ENCODE measurements at regions of chr5 and their contacts with region 1.

Region 1: GRCh38 chr5:132500931-132501630 is 10.5 kb upstream of the IRF1 start:
- DNase-seq: peak; percentile 85
- ATAC-seq: peak; percentile 34
- H3K4me3 Mint-ChIP-seq: no peak overlapping the region
- H3K27ac Mint-ChIP-seq: no peak overlapping the region
- H3K4me1 Mint-ChIP-seq: peaks cover 22% of the 10 kb centered on the region
- H3K27me3 Mint-ChIP-seq: no peaks in the 10 kb centered on the region

Region 2: GRCh38 chr5:132272311-132273210 is 228.5 kb before region 1 on chr5:
- CTCF ChIA-PET with region 1: interaction called, 4 read pairs
- POLR2A ChIA-PET with region 1: no interaction called
- intact Hi-C with region 1: loop called in 1 of 2 experiments (anchors 1 kb)
- DNase-seq: peak; percentile 85
- ATAC-seq: peak; percentile 42
- H3K4me3 Mint-ChIP-seq: no peak overlapping the region
- H3K27ac Mint-ChIP-seq: no peak overlapping the region
- H3K4me1 Mint-ChIP-seq: peaks cover 2% of the 10 kb centered on the region
- H3K27me3 Mint-ChIP-seq: peaks cover 18% of the 10 kb centered on the region

Region 3: GRCh38 chr5:132410451-132411381 is 90.4 kb before region 1 on chr5:
- CTCF ChIA-PET with region 1: interaction called, 21 read pairs
- POLR2A ChIA-PET with region 1: interaction called, 16 read pairs
- intact Hi-C with region 1: loop called in 1 of 2 experiments (anchors 1 kb)
- DNase-seq: peak; percentile 92
- ATAC-seq: peak; percentile 68
- H3K4me3 Mint-ChIP-seq: peak overlapping the region; percentile 83
- H3K27ac Mint-ChIP-seq: peak overlapping the region; percentile 98
- H3K4me1 Mint-ChIP-seq: peaks cover 71% of the 10 kb centered on the region
- H3K27me3 Mint-ChIP-seq: no peaks in the 10 kb centered on the region

Region 4: GRCh38 chr5:132437604-132438266 is 63.3 kb before region 1 on chr5:
- CTCF ChIA-PET with region 1: interaction called, 13 read pairs
- POLR2A ChIA-PET with region 1: no interaction called
- intact Hi-C with region 1: no loop called
- DNase-seq: peak; percentile 81
- ATAC-seq: peak; percentile 91
- H3K4me3 Mint-ChIP-seq: peak overlapping the region; percentile 12
- H3K27ac Mint-ChIP-seq: peak overlapping the region; percentile 65
- H3K4me1 Mint-ChIP-seq: peaks cover 79% of the 10 kb centered on the region
- H3K27me3 Mint-ChIP-seq: no peaks in the 10 kb centered on the region

Region 5: DNA sequence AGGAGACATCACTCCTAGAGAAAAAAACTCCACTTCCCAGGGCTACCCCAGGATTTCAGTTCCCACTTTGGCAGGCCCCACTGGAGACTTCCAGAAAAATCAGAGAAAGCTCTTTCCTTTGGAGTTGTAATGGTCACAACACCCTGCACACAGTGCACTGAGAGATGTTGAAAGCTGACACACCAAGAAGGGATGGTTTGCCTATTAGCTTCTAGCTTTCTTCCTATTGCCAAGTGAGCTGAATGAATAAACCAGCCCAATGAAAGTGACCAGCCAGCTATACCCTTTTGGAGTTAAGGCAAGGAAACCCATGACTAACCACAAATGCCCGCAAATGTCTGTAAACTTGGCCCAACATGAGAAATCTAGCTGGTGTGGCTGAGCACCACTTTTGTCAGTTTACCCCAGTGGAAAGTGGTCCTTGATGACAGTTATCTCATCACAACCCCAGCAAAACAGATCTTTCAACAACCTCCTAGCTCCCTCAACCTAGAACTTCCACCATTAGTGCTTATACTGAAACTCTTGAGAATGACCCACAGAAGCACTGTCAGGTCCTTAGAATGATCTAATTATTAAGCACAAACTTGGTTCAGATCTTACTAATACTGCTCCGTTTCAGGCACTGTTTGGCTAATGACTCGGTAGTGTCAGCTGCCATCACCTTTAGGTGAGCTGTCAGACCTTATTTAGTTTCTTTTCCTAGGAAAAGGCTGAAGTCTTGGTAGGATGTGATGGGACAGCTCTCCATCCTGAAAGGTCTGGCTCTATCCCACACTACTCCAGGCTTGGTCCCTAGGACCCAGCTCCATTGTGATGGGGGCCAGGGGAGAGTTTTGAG is 21.8 kb before region 1 on chr5:
- CTCF ChIA-PET with region 1: interaction called, 11 read pairs
- POLR2A ChIA-PET with region 1: interaction called, 116 read pairs
- intact Hi-C with region 1: no loop called
- DNase-seq: no peak
- ATAC-seq: peak; percentile 31
- H3K4me3 Mint-ChIP-seq: no peak overlapping the region
- H3K27ac Mint-ChIP-seq: peak overlapping the region; percentile 65
- H3K4me1 Mint-ChIP-seq: peaks cover 53% of the 10 kb centered on the region
- H3K27me3 Mint-ChIP-seq: no peaks in the 10 kb centered on the region